ENCODE measurements at regions of chr7 and their contacts with region 1.

Region 1: GRCh38 chr7:26305463-26306273 is 14.0 kb downstream of the SNX10 start:
- DNase-seq: no peak
- ATAC-seq: no peak
- H3K4me3 ChIP-seq: no peak overlapping the region
- H3K27ac ChIP-seq: no peak overlapping the region
- H3K4me1 ChIP-seq: no peaks in the 10 kb centered on the region
- H3K27me3 ChIP-seq: no peaks in the 10 kb centered on the region
- CTCF ChIP-seq: no peak

Region 2: DNA sequence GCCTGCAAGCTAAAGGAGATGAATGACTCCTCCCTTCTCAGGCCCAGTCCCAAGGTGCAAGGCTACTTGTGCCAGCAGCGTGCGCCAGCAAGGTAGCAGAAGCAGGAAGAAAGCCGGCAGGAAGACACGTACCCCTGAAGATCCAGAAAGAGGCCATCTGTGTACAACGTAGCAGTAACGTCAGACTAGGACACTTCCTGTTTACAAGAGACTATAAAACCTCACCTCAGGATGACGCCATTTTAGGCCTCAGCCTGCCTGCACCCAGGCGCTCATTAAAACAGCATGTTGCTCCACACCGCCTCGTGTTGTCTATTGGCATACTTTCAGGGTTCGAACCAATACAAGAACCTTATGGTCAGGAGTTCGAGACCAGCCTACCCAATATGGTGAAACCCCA is 55.4 kb before region 1 on chr7:
- CTCF ChIA-PET with region 1: no interaction called
- POLR2A ChIA-PET with region 1: interaction called, 17 read pairs
- in situ Hi-C with region 1: no loop called
- intact Hi-C with region 1: no loop called
- DNase-seq: no peak
- ATAC-seq: no peak
- H3K4me3 ChIP-seq: no peak overlapping the region
- H3K27ac ChIP-seq: no peak overlapping the region
- H3K4me1 ChIP-seq: no peaks in the 10 kb centered on the region
- H3K27me3 ChIP-seq: 0 out of 2 replicates have a peak, but pooled peaks cover 2% of the 10 kb centered on the region
- CTCF ChIP-seq: no peak

Measured in Panc1 (cell line).